Mucosa of descending colon (tissue), 3 donors: ENCODE measurements at regions of chr1 and their contacts with region 1.

Region 1: GRCh38 chr1:23539698-23540266 is 8.7 kb upstream of the E2F2 start:
- DNase-seq: peak; percentile 91 to 96 (median 95)
- ATAC-seq: peak; percentile 96
- H3K4me3 ChIP-seq: no peak overlapping the region
- H3K4me1 ChIP-seq: peaks cover 9% of the 10 kb centered on the region
- CTCF ChIP-seq: peak; percentile 85

Region 2: GRCh38 chr1:22969304-22969709 is 570.5 kb before region 1 on chr1:
- intact Hi-C with region 1: no loop called
- DNase-seq: peak in 1 of 3 donors; percentile 74
- ATAC-seq: peak; percentile 88
- H3K4me3 ChIP-seq: no peak overlapping the region
- H3K4me1 ChIP-seq: no peaks in the 10 kb centered on the region
- CTCF ChIP-seq: no peak

Region 3: GRCh38 chr1:23475134-23475628 is 64.6 kb before region 1 on chr1:
- intact Hi-C with region 1: no loop called
- DNase-seq: no peak
- ATAC-seq: no peak
- H3K4me3 ChIP-seq: no peak overlapping the region
- H3K4me1 ChIP-seq: no peaks in the 10 kb centered on the region
- CTCF ChIP-seq: no peak

Region 4: DNA sequence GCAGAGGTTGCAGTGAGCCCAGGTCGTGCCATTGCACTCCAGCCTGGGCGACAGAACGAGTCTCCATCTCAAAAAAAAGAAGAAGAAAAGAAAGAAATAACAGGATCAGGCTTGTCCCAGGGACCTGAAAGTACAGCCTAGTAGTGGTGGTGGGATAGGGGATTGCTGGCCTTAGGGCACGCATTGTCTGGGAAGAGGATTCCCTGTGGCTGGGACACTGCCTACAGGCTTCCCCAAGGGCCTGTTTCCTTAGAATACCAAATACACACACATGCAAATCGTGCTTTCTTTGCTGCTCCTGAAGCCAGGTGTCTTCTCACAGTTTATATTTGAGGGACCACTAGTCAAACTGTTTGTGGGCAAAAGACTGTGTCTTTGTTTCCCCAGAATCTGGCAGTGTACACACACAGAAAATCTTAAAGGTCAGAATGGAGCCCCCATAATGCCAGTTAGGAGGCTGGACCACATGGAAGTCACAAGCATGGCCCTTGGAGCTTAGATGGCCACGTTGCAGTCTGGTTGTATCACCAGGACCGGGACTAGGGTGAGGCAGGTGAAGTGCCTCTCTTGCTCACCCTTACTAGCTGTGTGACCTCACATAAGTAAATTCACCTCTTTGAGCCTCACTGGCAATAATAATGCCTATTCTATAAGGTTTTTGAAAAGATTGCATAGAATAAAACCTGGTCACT is 43.1 kb before region 1 on chr1:
- intact Hi-C with region 1: loop called (anchors 2 to 5 kb)
- DNase-seq: no peak
- ATAC-seq: peak; percentile 6
- H3K4me3 ChIP-seq: no peak overlapping the region
- H3K4me1 ChIP-seq: no peaks in the 10 kb centered on the region
- CTCF ChIP-seq: no peak

Region 5: GRCh38 chr1:23634842-23635651 is 95.3 kb after region 1 on chr1:
- intact Hi-C with region 1: loop called (anchors 1 to 2 kb)
- DNase-seq: peak in 2 of 3 donors; percentile 43 to 72
- ATAC-seq: peak; percentile 93
- H3K4me3 ChIP-seq: no peak overlapping the region
- H3K4me1 ChIP-seq: peaks cover 6% of the 10 kb centered on the region
- CTCF ChIP-seq: peak; percentile 77

Region 6: GRCh38 chr1:23959041-23959460 is 419.3 kb after region 1 on chr1:
- intact Hi-C with region 1: no loop called
- DNase-seq: peak; percentile 89 to 94 (median 92)
- ATAC-seq: peak; percentile 86
- H3K4me3 ChIP-seq: peak overlapping the region; percentile 83
- H3K4me1 ChIP-seq: peaks cover 21% of the 10 kb centered on the region
- CTCF ChIP-seq: no peak